Heart left ventricle (tissue), 16 donors: ENCODE measurements at regions of chr10 and their contacts with region 1.

Region 1: GRCh38 chr10:30893208-30893607 is 138.5 kb downstream of the ZNF438 start:
- DNase-seq: no peak
- ATAC-seq: no peak
- H3K4me3 ChIP-seq: no peak overlapping the region
- H3K27ac ChIP-seq: no peak overlapping the region
- H3K4me1 ChIP-seq: peaks cover 0 to 4% (median 0%) of the 10 kb centered on the region in 12 donors
- H3K27me3 ChIP-seq: no peaks in the 10 kb centered on the region
- CTCF ChIP-seq: no peak
- POLR2A ChIP-seq: no peak

Region 2: GRCh38 chr10:30820261-30820991 is 72.8 kb before region 1 on chr10:
- intact Hi-C with region 1: loop called in 1 of 10 experiments (anchors 5 kb)
- DNase-seq: no peak
- ATAC-seq: peak in 3 of 4 donors; percentile 6 to 66 (median 18)
- H3K4me3 ChIP-seq: peak overlapping the region in 2 of 12 donors; percentile 40 to 53
- H3K27ac ChIP-seq: peak overlapping the region; percentile 51 to 92 (median 77)
- H3K4me1 ChIP-seq: peaks cover 0 to 43% (median 18%) of the 10 kb centered on the region in 12 donors
- H3K27me3 ChIP-seq: no peaks in the 10 kb centered on the region
- CTCF ChIP-seq: no peak
- POLR2A ChIP-seq: no peak